Activated T-helper 1 cell treated with anti-CD3 and anti-CD28 coated beads, Interleukin-12 subunit alpha, Interleukin-12 subunit beta, Interleukin-2, Interleukin-4 antibody, amounts not matched to agents 30 ng/mL and 10 ng/mL and 1 ng/mL, durations not matched to agents 14 hours and 24 hours and 36 hours (primary cell): ENCODE measurements at regions of chr5 and their contacts with region 1.

Region 1: GRCh38 chr5:97094579-97095317 is 47.7 kb downstream of the LIX1 start:
- DNase-seq: peak; percentile 45
- H3K4me3 Mint-ChIP-seq: peak overlapping the region; percentile 19
- H3K27ac Mint-ChIP-seq: peak overlapping the region; percentile 67
- H3K4me1 Mint-ChIP-seq: peaks cover 28% of the 10 kb centered on the region
- H3K27me3 Mint-ChIP-seq: peaks cover 31% of the 10 kb centered on the region

Region 2: GRCh38 chr5:96662725-96663513 is 431.8 kb before region 1 on chr5:
- intact Hi-C with region 1: loop called (anchors 5 kb)
- DNase-seq: peak; percentile 82
- H3K4me3 Mint-ChIP-seq: peak overlapping the region; percentile 98
- H3K27ac Mint-ChIP-seq: peak overlapping the region; percentile 98
- H3K4me1 Mint-ChIP-seq: peaks cover 67% of the 10 kb centered on the region
- H3K27me3 Mint-ChIP-seq: peaks cover 11% of the 10 kb centered on the region

Region 3: DNA sequence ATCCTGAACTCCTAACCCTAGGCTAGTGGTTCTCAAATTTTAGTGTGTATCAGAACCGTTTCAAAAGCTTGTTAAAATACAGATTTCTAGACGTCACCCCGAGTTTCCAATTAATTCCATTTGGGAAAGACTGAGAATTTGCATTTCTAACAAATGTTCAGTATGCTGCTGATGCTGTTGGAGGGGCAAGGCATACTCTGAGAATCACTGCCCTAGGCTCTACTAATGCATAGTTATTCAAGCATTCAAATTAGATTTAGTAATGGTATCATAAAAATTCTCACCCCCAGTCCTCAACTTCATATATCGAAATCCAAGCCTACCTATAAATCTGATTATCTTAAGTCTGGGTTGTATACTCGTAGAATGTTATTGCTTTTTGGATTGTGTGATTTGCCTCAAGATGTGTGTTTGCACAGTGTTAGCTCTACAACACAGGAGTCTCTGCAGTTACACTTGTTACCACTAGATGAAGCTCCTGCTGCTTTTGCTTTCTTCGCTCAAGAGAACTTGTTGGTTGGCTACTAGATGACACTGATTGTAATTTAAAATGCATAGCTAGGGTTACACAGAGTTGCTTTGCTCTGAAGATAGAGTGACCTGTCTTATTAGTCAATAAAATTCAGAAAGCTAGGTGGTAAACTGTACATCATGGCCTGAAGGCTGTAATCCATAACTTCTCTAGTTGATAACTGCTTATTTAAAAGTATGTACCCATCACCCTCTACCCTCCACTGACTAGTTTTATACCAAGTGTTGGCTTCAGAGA is 226.0 kb before region 1 on chr5:
- intact Hi-C with region 1: loop called (anchors 2 kb)
- DNase-seq: no peak
- H3K4me3 Mint-ChIP-seq: no peak overlapping the region
- H3K27ac Mint-ChIP-seq: peak overlapping the region; percentile 47
- H3K4me1 Mint-ChIP-seq: peaks cover 57% of the 10 kb centered on the region
- H3K27me3 Mint-ChIP-seq: no peaks in the 10 kb centered on the region

Region 4: DNA sequence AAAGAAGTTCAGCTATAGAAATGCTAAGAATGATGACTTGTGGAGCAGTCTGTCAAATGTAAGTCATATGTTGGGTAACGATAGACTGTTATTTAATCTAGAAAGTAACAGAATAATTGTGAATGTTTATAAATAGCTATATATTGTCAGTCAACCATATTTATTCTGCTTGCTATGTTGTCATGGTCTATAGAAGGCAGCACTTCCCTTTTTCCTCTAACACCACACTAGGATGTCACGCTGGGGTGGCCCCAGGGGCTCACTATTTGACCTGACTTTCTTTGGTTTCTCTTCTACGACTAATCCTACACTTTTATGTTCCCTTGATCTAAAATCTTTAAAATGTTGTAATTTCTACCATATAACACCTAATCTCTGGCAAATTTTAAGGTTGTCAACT is 197.9 kb before region 1 on chr5:
- intact Hi-C with region 1: loop called (anchors 1 kb)
- DNase-seq: no peak
- H3K4me3 Mint-ChIP-seq: peak overlapping the region; percentile 84
- H3K27ac Mint-ChIP-seq: peak overlapping the region; percentile 96
- H3K4me1 Mint-ChIP-seq: peaks cover 62% of the 10 kb centered on the region
- H3K27me3 Mint-ChIP-seq: no peaks in the 10 kb centered on the region

Region 5: GRCh38 chr5:96963267-96963666 is 131.5 kb before region 1 on chr5:
- intact Hi-C with region 1: loop called (anchors 1 kb)
- DNase-seq: peak; percentile 16
- H3K4me3 Mint-ChIP-seq: peak overlapping the region; percentile 77
- H3K27ac Mint-ChIP-seq: peak overlapping the region; percentile 80
- H3K4me1 Mint-ChIP-seq: peaks cover 70% of the 10 kb centered on the region
- H3K27me3 Mint-ChIP-seq: no peaks in the 10 kb centered on the region

Region 6: DNA sequence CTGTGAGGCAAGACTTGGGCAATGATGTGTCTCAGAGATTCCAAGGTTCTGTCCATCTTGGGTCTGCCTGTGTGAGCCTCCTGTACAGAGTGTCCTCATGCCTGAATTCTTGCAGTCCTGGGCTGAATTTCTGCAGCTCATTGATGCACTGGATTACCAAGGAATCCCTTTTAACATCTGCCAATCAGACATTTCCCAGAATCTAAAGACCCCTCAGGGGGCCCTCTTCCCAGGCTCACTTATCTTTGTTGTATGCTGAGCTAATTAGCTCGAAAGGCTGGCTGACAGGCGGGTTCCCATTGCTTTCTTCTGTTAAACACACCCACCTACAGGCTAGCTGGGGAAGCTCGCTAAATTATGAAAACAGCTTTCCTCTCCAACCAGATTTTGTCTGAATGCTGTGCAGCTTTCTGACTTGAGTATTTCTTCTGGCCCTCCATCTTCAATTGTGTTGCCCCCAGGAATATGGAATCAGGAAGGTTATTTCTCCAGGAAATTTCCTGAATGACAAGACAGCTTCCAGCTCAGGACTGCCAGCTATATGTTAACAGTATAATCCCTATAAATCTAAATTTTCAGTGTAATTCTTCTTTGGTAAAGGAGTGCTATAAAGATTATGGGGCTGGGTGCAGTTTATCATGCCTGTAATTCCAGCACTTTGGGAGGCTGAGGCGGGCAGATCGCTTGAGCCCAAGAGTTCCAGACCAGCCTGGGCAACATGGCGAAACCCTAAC is 47.9 kb after region 1 on chr5 and contains the start of gene LIX1:
- intact Hi-C with region 1: loop called (anchors 2 kb)
- DNase-seq: no peak
- H3K4me3 Mint-ChIP-seq: no peak within 1 kb of the TSS
- H3K27ac Mint-ChIP-seq: no peak within 1 kb of the TSS
- H3K4me1 Mint-ChIP-seq: peaks cover 7% of the 10 kb centered on the region
- H3K27me3 Mint-ChIP-seq: peaks cover 28% of the 10 kb centered on the region
- total RNA-seq, gene LIX1: not detected in 2 replicates

Region 7: DNA sequence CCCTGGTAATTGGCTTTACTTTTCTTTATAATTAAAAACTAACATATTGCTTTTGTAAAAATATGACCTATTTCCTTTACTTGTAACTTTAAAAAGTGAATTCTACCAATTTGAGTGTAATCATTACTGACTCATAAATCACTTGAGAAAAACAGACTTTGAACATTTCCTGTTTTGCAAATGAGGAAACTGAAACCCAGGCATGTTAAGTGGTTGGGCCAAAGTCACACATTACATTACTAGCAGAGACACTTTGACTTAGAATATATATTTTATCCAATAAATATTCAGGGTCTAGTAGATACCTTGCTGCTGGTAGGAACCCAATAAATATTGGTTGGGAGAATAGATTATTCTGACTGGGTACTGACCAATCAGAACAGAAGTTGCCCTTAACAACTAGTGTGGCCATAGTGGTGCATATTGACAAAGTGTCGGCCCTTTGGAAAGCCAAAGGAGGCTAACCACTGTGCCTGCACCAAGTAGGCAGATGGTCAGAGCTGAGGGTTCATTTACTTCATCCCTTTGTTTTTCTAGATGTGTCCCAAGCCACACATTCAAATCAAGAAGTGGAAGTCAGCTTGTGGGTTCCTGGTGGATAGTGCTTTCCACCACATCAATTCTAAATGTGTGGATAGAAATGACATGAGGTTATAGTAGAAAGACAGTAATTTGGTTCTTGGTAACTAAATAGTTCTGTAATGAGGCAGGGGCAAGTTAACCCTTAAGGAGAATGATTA is 453.4 kb after region 1 on chr5:
- intact Hi-C with region 1: loop called (anchors 2 kb)
- DNase-seq: no peak
- H3K4me3 Mint-ChIP-seq: no peak overlapping the region
- H3K27ac Mint-ChIP-seq: no peak overlapping the region
- H3K4me1 Mint-ChIP-seq: peaks cover 18% of the 10 kb centered on the region
- H3K27me3 Mint-ChIP-seq: peaks cover 3% of the 10 kb centered on the region